ENCODE measurements at regions of chr13 and their contacts with region 1.

Region 1: DNA sequence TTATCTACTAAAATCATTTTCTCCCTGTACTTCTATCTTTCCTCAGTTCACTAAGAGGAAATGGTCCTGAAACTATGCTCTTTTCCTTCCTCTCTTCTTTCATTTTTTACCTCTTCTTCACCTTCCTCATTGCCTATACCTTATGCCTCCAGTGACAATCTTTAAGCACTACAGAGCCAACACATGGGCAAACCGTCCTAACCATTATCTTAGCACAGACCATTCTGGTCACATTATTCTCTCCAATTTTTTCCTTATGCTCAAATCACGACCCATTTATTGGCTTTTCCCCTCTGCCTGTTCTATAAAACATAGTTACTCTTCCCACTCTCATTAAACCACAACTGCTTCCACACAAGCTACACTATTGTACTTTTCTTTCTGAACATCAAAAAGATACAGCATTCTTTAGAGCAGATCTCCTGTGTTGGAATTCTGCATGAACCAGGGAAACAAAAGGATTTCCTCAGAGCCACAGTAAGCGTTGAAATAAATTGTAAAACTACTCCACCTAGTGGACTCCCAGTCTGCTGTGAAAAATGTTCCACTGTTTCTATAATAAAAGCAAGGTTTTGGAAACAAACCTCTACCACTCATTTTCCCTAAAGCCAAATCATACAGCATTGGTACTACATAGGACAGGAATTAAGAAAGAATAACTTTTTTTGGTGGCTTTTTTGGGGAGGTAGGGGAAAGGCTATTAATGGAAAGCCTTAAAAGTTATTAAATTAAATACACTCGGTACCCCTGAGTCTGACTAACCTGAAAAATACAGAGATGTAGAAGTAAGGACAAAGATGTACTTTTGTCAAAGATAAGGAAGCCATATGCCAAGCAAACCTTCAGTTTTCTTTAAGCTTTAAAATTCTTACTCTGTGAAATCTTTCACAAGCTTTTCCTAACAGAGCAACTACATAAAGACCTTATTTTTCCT is 19.5 kb downstream of the NUFIP1 start:
- DNase-seq: no peak
- ATAC-seq: no peak
- H3K4me3 Mint-ChIP-seq: no peak overlapping the region
- H3K27ac Mint-ChIP-seq: no peak overlapping the region
- H3K4me1 Mint-ChIP-seq: no peaks in the 10 kb centered on the region
- H3K27me3 Mint-ChIP-seq: no peaks in the 10 kb centered on the region
- CTCF ChIP-seq: no peak

Region 2: GRCh38 chr13:44988973-44989817 is 19.4 kb after region 1 on chr13 and contains the starts of genes GPALPP1 and NUFIP1:
- CTCF ChIA-PET with region 1: no interaction called
- POLR2A ChIA-PET with region 1: no interaction called
- intact Hi-C with region 1: no loop called
- DNase-seq: peak; percentile 80
- ATAC-seq: peak; percentile 97
- H3K4me3 Mint-ChIP-seq: peak within 1 kb of the TSS; percentile 99
- H3K27ac Mint-ChIP-seq: peak within 1 kb of the TSS; percentile 98
- H3K4me1 Mint-ChIP-seq: peaks cover 37% of the 10 kb centered on the region
- H3K27me3 Mint-ChIP-seq: no peaks in the 10 kb centered on the region
- CTCF ChIP-seq: no peak
- total RNA-seq, gene GPALPP1: 28.8 and 35.8 TPM in 2 replicates
- total RNA-seq, gene NUFIP1: 6.6 and 7.8 TPM in 2 replicates

Region 3: GRCh38 chr13:45310341-45311125 is 340.7 kb after region 1 on chr13:
- CTCF ChIA-PET with region 1: no interaction called
- POLR2A ChIA-PET with region 1: no interaction called
- intact Hi-C with region 1: loop called (anchors 1 kb)
- DNase-seq: no peak
- ATAC-seq: no peak
- H3K4me3 Mint-ChIP-seq: peak overlapping the region; percentile 83
- H3K27ac Mint-ChIP-seq: no peak overlapping the region
- H3K4me1 Mint-ChIP-seq: peaks cover 18% of the 10 kb centered on the region
- H3K27me3 Mint-ChIP-seq: peaks cover 7% of the 10 kb centered on the region
- CTCF ChIP-seq: no peak